KBM-7 (cell line): ENCODE measurements at regions of chr11 and their contacts with region 1.

Region 1: DNA sequence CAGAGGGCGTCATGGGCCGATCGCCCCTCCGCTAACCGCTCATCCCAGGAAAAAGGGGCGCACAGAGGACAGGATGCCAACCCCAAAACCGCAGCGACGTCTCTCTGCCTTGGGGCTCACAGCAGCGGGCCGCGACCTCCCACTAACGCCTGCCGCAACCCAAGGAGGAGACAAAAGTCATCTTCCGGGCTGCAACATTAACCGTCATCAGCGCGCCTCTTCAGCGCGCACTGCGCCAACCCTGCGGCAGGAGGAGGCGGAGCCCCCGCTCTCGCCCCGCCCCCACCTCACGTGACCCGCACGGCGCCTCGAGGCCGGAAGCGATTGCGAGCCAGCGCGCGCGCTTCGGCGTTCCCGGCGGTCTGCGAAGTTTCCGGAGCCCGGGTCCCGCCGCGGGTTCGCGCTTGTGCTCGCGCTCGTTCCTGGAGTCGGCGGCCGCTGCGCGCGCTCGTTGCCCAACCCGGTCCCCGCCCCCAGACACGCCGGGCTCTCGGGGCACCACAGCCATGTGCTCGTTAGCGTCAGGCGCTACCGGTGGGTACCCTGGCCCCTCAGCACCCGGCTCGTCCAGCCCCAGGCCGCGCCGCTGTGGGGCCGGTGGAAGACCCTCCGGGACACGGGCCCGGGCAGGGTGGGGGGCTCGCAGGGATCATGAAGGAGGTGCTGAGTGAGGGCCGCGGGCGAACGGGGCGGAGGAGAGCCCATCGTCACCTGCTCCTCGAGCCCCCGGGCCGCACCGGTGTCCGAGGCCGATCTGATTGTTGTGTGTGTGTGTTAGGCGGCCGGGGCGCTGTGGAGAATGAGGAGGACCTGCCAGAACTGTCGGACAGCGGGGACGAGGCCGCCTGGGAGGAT is at the start of gene PRMT3:
- DNase-seq: peak; percentile 97

Region 2: GRCh38 chr11:20459865-20460264 is 72.4 kb after region 1 on chr11:
- in situ Hi-C with region 1: no loop called
- DNase-seq: no peak

Region 3: GRCh38 chr11:20609727-20610707 is 222.5 kb after region 1 on chr11:
- in situ Hi-C with region 1: loop called (anchors 25 kb)
- DNase-seq: peak; percentile 76